Motor neuron (in vitro differentiated cells): ENCODE measurements at regions of chr5 and their contacts with region 1.

Region 1: GRCh38 chr5:98773464-98774191 is at the start of gene RGMB:
- ATAC-seq: peak; percentile 78 to 89 (median 84)
- H3K4me3 ChIP-seq: peak within 1 kb of the TSS; percentile 59 to 80 (median 71)
- H3K27ac ChIP-seq: peak within 1 kb of the TSS; percentile 72 to 77
- H3K4me1 ChIP-seq: peaks cover 10 to 16% of the 10 kb centered on the region in 2 donors
- total RNA-seq, gene RGMB: 4.2 to 92.9 (median 32.5) TPM

Region 2: GRCh38 chr5:97183100-97183929 is 1590.3 kb before region 1 on chr5 and contains the start of gene RIOK2:
- in situ Hi-C with region 1: loop called in 1 of 9 experiments (anchors 25 kb)
- ATAC-seq: peak; percentile 87 to 94 (median 92)
- H3K4me3 ChIP-seq: peak within 1 kb of the TSS; percentile 54 to 76 (median 58)
- H3K27ac ChIP-seq: peak within 1 kb of the TSS; percentile 94 to 96
- H3K4me1 ChIP-seq: peaks cover 0 to 7% of the 10 kb centered on the region in 2 donors
- total RNA-seq, gene RIOK2: 20.9 to 50.1 (median 26.5) TPM

Region 3: DNA sequence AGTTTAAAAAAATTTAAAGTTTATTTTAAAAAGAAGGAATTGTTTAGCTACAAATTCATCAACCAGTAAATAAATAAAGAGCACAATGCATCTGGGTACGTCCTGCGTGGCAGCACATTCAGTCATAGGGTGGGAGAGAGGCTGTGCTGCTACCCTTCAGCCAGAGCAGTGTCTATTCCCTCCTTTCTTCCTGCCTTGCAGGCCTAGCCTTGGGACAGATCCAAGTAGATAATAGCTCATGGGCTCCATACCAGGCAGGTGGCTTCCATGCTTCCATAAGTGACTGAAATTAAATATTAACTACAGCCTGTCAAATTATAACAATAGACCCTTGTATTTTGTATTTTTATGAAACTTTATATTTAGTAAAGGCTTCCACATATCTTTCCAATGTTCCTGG is 408.5 kb before region 1 on chr5:
- in situ Hi-C with region 1: loop called in 1 of 9 experiments (anchors 25 kb)
- ATAC-seq: no peak
- H3K4me3 ChIP-seq: no peak overlapping the region
- H3K27ac ChIP-seq: no peak overlapping the region
- H3K4me1 ChIP-seq: peaks cover 0 to 6% of the 10 kb centered on the region in 2 donors

Region 4: GRCh38 chr5:98454904-98455303 is 318.7 kb before region 1 on chr5:
- in situ Hi-C with region 1: loop called in 1 of 9 experiments (anchors 25 kb)
- ATAC-seq: peak in 3 of 8 experiments; percentile 88 to 100 (median 99)
- H3K4me3 ChIP-seq: no peak overlapping the region
- H3K27ac ChIP-seq: no peak overlapping the region
- H3K4me1 ChIP-seq: no peaks in the 10 kb centered on the region

Region 5: GRCh38 chr5:98556712-98557111 is 216.9 kb before region 1 on chr5:
- in situ Hi-C with region 1: no loop called
- ATAC-seq: no peak
- H3K4me3 ChIP-seq: no peak overlapping the region
- H3K27ac ChIP-seq: no peak overlapping the region
- H3K4me1 ChIP-seq: no peaks in the 10 kb centered on the region

Region 6: DNA sequence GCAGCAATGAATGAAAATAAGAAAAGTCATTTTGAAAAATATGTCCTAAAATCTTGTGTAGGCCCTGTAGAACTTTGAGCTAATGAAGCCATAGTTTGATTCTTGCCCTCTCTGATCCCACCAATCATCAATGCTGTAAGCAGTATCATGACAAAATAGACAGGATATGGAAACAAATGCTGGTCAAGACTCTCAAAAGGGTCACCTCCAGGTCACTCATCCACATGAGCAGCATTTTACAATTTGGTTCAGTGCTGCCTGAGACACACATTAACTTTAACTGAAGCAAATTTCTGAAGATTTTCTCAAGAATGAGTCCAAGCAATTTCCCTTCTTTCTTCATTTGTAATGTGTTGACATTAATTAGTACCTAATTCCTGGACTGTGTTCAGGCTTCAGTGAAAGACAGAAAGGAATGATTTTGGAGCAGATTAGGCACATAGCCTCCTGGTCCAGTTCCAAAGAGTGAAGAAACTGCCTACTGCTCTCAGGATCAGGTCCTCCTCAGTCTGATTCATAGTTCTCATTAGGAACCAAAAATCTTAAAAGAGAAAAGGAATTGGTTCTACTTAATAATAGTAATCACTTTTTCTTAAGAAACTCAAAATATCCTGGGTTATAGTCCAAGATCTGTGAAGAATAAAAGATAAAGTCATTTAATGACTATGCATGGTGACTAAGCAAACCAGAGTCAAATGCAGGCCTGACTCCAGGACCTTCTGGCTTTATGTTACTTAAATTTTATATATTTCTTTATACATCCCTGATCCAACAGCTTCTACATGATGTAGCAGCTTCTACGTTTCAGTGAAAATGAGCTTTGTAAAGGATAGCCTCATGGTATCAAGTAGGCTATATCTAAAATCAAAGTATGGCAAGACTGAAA is 192.3 kb before region 1 on chr5:
- in situ Hi-C with region 1: loop called in 1 of 9 experiments (anchors 25 kb)
- ATAC-seq: peak in 2 of 8 experiments; percentile 85 to 89
- H3K4me3 ChIP-seq: no peak overlapping the region
- H3K27ac ChIP-seq: no peak overlapping the region
- H3K4me1 ChIP-seq: peaks cover 9 to 22% of the 10 kb centered on the region in 2 donors

Region 7: GRCh38 chr5:98880151-98880550 is 106.5 kb after region 1 on chr5:
- in situ Hi-C with region 1: no loop called
- ATAC-seq: no peak
- H3K4me3 ChIP-seq: no peak overlapping the region
- H3K27ac ChIP-seq: no peak overlapping the region
- H3K4me1 ChIP-seq: no peaks in the 10 kb centered on the region

Region 8: GRCh38 chr5:99004960-99005359 is 231.3 kb after region 1 on chr5:
- in situ Hi-C with region 1: no loop called
- ATAC-seq: peak in 3 of 8 experiments; percentile 35 to 88 (median 77)
- H3K4me3 ChIP-seq: no peak overlapping the region
- H3K27ac ChIP-seq: no peak overlapping the region
- H3K4me1 ChIP-seq: no peaks in the 10 kb centered on the region